ENCODE measurements at regions of chr19 and their contacts with region 1.

Region 1: GRCh38 chr19:48558018-48558684 is 6.2 kb downstream of the SULT2B1 start:
- DNase-seq: peak; percentile 75
- ATAC-seq: peak; percentile 87
- H3K4me3 ChIP-seq: peak overlapping the region; percentile 38; the same call in 1 of the 2 replicates
- H3K27ac ChIP-seq: peak overlapping the region; percentile 53
- H3K4me1 ChIP-seq: peaks cover 21% of the 10 kb centered on the region
- H3K27me3 ChIP-seq: no peaks in the 10 kb centered on the region
- CTCF ChIP-seq: no peak

Region 2: GRCh38 chr19:48506138-48506733 is 51.9 kb before region 1 on chr19:
- CTCF ChIA-PET with region 1: interaction called, 11 read pairs
- POLR2A ChIA-PET with region 1: no interaction called
- intact Hi-C with region 1: no loop called
- DNase-seq: peak; percentile 50
- ATAC-seq: no peak
- H3K4me3 ChIP-seq: no peak overlapping the region
- H3K27ac ChIP-seq: no peak overlapping the region
- H3K4me1 ChIP-seq: peaks cover 6% of the 10 kb centered on the region
- H3K27me3 ChIP-seq: no peaks in the 10 kb centered on the region
- CTCF ChIP-seq: peak; percentile 62